ENCODE measurements at regions of chr9 and their contacts with region 1.

Region 1: GRCh38 chr9:121992571-121993212 is 100.4 kb downstream of the TTLL11 start:
- DNase-seq: peak; percentile 51
- H3K4me3 ChIP-seq: no peak overlapping the region
- H3K27ac ChIP-seq: no peak overlapping the region
- H3K4me1 ChIP-seq: no peaks in the 10 kb centered on the region
- H3K27me3 ChIP-seq: no peaks in the 10 kb centered on the region
- CTCF ChIP-seq: peak; percentile 81

Region 2: DNA sequence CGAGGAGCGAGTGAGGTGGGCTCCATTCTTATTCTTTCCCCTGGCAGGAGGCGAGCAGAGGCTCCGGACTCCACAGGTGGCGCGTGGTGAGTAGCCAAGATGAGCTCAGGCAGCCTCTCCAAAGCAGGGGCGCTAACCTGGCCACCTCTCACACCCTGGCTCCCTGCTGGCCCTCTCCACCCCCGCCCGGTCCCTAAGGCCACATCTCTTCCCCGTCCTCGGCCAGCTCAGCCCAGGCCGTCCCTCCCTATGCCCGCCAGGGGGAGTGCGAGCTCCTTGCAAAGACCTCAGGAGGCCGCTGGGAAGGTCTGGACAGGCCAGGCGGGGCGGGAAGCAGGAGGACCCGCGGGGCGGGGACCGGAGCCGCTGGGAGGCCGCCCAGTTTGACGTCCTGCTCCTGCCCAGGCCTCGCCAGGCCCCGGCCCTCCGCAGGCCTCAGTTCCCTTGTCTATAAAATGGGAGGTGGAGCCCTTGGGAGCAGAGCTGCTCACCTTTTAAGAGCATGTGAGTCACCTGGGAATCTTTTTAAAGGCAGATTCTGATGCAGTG is 446.7 kb before region 1 on chr9:
- intact Hi-C with region 1: loop called (anchors 2 kb)
- DNase-seq: peak; percentile 96
- H3K4me3 ChIP-seq: no peak overlapping the region
- H3K27ac ChIP-seq: no peak overlapping the region
- H3K4me1 ChIP-seq: peaks cover 4% of the 10 kb centered on the region
- H3K27me3 ChIP-seq: no peaks in the 10 kb centered on the region
- CTCF ChIP-seq: peak; percentile 79

Region 3: GRCh38 chr9:121634329-121635261 is 358.1 kb before region 1 on chr9:
- intact Hi-C with region 1: loop called (anchors 5 kb)
- DNase-seq: peak; percentile 51
- H3K4me3 ChIP-seq: no peak overlapping the region
- H3K27ac ChIP-seq: no peak overlapping the region
- H3K4me1 ChIP-seq: peaks cover 11% of the 10 kb centered on the region
- H3K27me3 ChIP-seq: no peaks in the 10 kb centered on the region
- CTCF ChIP-seq: peak; percentile 50

Region 4: GRCh38 chr9:121686930-121687541 is 305.7 kb before region 1 on chr9:
- intact Hi-C with region 1: loop called (anchors 5 kb)
- DNase-seq: peak; percentile 90
- H3K4me3 ChIP-seq: no peak overlapping the region
- H3K27ac ChIP-seq: no peak overlapping the region
- H3K4me1 ChIP-seq: peaks cover 3% of the 10 kb centered on the region
- H3K27me3 ChIP-seq: no peaks in the 10 kb centered on the region
- CTCF ChIP-seq: peak; percentile 90

Region 5: DNA sequence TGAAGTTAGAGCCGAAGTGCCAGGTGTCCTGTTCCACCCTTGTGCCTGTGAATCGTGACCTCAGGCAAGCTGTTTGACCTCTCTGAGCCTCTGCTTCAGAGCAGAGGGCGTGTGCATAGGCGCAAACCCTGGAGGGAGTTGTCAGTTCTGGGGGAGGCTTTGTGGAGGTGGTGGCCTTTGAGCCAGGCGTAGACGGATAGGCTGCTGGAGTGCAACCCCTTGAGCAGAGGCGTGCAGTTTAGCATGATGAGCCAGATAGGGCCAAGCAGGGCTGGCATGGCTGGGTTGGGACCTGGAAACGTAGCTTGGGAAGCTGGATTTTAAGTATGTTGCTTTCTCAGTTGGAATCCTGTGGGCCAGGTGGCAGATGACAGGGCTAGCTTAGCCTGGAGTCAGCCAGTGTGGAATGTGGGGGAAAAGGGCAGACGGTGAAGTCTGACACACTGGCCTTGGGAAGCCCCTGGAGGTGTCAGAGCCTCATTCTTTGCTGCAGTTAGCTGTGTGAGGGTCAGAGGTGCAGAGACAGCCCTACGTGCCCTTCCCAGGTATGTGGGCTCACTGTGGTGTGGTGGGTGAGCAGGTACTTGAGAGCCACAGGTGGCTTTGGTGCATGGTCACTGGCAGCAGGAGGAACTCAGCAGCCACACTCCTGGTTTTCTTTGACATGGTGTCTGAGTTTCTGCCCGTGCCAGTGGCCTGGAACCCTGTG is 247.9 kb before region 1 on chr9:
- intact Hi-C with region 1: loop called (anchors 5 kb)
- DNase-seq: no peak
- H3K4me3 ChIP-seq: peak overlapping the region; percentile 37
- H3K27ac ChIP-seq: peak overlapping the region; percentile 82
- H3K4me1 ChIP-seq: peaks cover 15% of the 10 kb centered on the region
- H3K27me3 ChIP-seq: no peaks in the 10 kb centered on the region
- CTCF ChIP-seq: no peak

Measured in colonic mucosa (tissue), 4 donors.